Activated CD4-positive, alpha-beta T cell treated with anti-CD3 and anti-CD28 coated beads, Interleukin-2, amount 10 ng/mL, durations not matched to agents 24 days and 14 days (primary cell): ENCODE measurements at regions of chr21 and their contacts with region 1.

Region 1: DNA sequence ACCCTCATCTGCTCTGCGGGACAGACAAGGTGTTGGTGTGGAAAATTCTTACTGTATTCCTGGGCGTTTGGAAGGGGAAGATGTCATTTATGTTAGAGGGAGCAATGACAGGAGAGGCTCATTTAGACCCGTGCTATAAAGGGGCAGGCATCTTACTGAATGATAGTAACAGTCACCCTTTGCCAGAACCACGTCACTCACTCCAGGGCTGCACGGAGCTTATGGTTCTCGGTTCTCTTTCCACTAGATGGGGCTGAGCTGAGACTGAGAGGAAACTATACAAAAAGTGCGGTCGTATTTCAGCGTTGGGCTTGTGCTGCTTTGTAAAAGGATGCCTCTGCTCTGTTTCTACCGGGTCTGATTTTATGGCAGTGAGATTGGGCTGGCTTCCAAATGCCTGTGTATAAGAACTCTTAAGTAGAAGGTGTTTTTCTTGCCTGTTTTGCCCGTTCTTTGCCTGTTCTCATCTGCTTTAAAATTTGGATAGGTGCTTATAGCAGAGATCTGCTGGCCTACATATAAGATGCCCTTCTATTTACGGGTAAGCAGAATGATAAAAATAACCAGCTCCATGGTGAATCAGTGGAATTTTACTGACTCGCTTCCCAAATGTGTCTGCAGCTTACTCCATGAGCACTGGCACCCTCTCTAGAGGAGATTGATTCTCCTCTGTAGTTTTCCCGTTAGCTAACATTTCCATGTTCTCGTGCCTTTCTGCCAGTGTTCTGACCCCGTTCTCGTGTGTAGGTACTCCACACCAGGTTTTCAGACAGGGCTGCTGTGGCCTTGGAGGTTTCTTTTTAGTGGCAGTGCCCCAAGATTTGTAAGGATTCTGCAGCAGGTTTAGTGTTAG is 55.9 kb downstream of the MRPS6 start:
- DNase-seq: peak; percentile 92
- H3K4me3 Mint-ChIP-seq: peak overlapping the region; percentile 77
- H3K27ac Mint-ChIP-seq: peak overlapping the region; percentile 95
- H3K4me1 Mint-ChIP-seq: peaks cover 77% of the 10 kb centered on the region
- H3K27me3 Mint-ChIP-seq: no peaks in the 10 kb centered on the region

Region 2: GRCh38 chr21:33734291-33734690 is 395.0 kb before region 1 on chr21:
- intact Hi-C with region 1: no loop called
- DNase-seq: no peak
- H3K4me3 Mint-ChIP-seq: no peak overlapping the region
- H3K27ac Mint-ChIP-seq: no peak overlapping the region
- H3K4me1 Mint-ChIP-seq: no peaks in the 10 kb centered on the region
- H3K27me3 Mint-ChIP-seq: no peaks in the 10 kb centered on the region

Region 3: DNA sequence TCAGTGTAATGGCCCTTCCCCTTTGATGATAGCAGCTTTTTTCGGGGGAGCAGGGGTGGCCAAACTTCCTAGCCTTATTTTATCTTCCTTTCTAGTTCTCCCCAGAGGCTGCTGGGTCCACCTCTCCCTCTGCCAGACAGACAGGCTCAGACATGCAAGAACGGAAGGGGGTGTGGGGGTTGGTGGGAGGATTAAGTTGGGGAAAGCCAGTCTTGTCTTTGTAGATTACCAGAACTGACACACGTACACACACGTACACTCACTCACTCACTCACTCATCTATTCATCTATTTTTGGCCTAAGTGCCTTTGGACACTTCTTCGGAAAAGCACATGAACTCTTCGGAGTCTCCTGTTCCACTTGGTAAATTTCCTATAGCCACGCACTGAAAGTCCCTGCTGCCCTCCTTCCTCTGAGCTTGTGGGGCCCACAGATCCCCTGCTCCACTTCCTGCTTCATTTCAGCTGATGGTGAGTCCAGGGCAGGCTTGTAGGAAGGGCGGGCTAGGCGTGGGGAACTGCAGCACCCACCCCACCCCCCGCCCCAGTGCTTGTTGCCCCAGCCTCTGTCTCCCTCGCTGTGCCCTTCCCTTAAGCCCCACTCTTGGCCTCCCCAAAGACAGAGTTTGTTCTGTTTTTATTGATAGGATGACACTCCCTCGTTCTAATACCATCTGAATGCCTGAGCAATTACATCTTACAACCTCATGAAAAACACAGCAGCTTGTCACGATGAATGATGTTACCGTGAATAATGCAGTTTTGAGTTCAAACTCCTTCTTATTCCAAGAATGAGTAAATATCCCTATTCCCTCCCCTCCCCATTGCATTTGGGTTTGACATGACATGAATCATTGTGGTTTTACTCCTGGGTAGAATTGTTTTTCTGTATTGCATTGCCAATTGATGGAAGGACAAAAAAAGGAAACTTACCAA is 152.9 kb before region 1 on chr21:
- intact Hi-C with region 1: loop called (anchors 1 kb)
- DNase-seq: peak; percentile 85
- H3K4me3 Mint-ChIP-seq: peak overlapping the region; percentile 71
- H3K27ac Mint-ChIP-seq: peak overlapping the region; percentile 97
- H3K4me1 Mint-ChIP-seq: peaks cover 72% of the 10 kb centered on the region
- H3K27me3 Mint-ChIP-seq: no peaks in the 10 kb centered on the region

Region 4: DNA sequence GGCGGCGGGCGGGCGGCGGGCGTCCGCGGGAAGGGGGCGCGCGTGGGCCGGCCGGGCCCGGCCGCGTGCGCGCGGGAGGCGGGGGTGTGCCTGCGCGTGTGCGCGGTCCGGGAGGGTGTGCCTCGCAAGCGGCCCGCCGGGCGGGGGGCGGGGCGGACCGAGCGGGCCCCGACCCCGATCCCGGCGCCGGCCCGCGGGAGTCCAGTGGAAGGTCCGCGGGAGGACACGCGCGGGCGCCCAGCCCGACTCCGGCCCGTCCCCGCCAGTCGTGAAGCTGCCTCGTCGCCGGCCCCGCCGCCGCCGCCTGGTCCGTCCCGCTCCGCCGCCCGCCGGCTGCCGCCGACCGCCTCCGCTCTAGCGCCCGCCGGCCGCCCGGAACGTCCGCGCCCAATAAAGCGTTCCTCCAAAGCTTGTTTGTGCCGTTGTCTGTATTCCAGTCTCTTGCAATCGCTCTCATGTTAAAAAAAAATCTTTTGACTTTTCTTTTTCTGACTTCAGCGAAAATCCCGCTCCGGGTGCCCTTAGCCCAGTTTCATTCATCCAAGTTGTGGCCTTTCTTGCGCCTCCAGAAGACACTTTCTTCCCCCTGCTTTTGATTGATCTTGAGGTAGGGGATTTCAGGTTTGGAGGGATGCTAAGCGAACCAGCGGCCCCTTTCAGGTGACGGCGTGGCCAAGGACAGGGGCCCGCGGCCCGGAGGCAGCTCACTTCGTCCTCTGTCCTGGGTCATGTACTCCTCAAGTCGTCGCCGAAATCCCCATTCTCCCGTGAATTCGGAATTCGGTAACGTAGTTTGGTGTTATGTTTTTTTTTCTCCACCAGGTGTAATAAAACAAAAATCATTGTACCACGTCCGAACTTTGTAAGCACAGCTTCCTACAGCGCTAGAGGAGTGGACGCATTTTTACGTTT is 55.1 kb before region 1 on chr21:
- intact Hi-C with region 1: loop called (anchors 2 kb)
- DNase-seq: peak; percentile 87
- H3K4me3 Mint-ChIP-seq: peak overlapping the region; percentile 96
- H3K27ac Mint-ChIP-seq: peak overlapping the region; percentile 93
- H3K4me1 Mint-ChIP-seq: peaks cover 48% of the 10 kb centered on the region
- H3K27me3 Mint-ChIP-seq: no peaks in the 10 kb centered on the region

Region 5: GRCh38 chr21:34154878-34155277 is 25.6 kb after region 1 on chr21:
- intact Hi-C with region 1: loop called (anchors 1 kb)
- DNase-seq: peak; percentile 87
- H3K4me3 Mint-ChIP-seq: peak overlapping the region; percentile 33
- H3K27ac Mint-ChIP-seq: peak overlapping the region; percentile 94
- H3K4me1 Mint-ChIP-seq: peaks cover 46% of the 10 kb centered on the region
- H3K27me3 Mint-ChIP-seq: no peaks in the 10 kb centered on the region

Region 6: GRCh38 chr21:34202553-34203372 is 73.5 kb after region 1 on chr21:
- intact Hi-C with region 1: loop called (anchors 1 kb)
- DNase-seq: no peak
- H3K4me3 Mint-ChIP-seq: peak overlapping the region; percentile 85
- H3K27ac Mint-ChIP-seq: peak overlapping the region; percentile 87
- H3K4me1 Mint-ChIP-seq: peaks cover 62% of the 10 kb centered on the region
- H3K27me3 Mint-ChIP-seq: no peaks in the 10 kb centered on the region

Region 7: GRCh38 chr21:34345091-34345871 is 216.0 kb after region 1 on chr21:
- intact Hi-C with region 1: loop called (anchors 5 kb)
- DNase-seq: no peak
- H3K4me3 Mint-ChIP-seq: no peak overlapping the region
- H3K27ac Mint-ChIP-seq: no peak overlapping the region
- H3K4me1 Mint-ChIP-seq: peaks cover 8% of the 10 kb centered on the region
- H3K27me3 Mint-ChIP-seq: no peaks in the 10 kb centered on the region

Region 8: DNA sequence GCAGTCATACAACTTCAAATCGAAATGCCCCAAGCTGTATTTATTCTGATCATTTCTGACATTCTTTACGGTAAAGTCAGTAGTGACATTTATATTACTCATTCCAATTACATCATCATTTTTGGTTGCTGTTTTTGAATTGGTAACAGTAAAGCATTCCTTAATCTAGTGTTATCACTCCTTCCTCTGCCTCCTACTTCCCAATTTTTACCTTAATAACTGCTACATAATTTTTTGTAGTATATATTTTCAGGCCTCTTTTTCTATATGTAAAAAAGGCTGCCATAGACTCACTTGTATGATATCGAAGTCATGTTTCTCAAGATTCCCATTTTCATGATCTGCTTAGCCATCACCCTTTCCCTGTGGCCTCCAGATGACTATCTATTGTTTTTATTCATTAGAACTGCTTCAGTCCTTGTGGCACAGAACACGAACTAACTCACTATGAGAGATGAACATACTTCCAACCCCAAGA is 752.7 kb after region 1 on chr21:
- intact Hi-C with region 1: no loop called
- DNase-seq: no peak
- H3K4me3 Mint-ChIP-seq: peak overlapping the region; percentile 70
- H3K27ac Mint-ChIP-seq: peak overlapping the region; percentile 43
- H3K4me1 Mint-ChIP-seq: peaks cover 41% of the 10 kb centered on the region
- H3K27me3 Mint-ChIP-seq: no peaks in the 10 kb centered on the region